ENCODE measurements at regions of chr1 and their contacts with region 1.

Region 1: DNA sequence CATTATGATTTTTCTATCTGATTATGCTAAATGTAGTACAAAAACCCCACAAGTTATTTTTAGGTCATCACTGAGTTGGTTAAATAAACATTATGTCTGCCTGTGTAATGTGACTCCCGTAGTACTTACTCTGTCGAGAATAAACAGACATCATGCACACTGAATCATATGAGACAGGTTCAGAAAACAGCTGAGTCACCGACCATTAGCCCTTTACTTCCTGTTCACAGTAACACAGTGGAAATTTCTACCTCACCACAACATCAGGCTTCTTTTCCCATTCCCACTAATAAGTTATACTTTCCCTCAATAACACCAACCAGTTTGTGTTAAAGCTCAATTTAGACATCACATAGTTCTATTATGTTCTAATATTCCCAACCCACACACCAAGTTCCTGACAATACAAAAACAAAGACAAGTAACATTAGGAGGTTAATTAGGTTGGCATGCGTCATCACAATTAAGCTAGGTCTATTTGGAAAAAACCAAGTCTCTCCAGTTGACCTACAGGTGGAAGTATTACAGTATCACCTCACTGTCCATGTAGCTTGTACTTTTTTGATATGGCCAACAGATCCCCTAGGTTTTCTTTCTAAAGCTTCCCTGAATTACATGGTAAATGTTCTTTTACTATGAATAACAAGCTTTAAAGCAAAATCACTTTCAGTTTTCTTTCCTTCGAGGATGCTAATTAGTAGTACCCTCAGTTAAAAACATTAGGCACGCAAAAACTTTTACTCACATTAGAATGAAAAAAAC is 154.2 kb downstream of the EIF4G3 start:
- DNase-seq: no peak
- ATAC-seq: peak; percentile 98 to 100 (median 99)
- H3K4me3 ChIP-seq: peak overlapping the region; percentile 38
- H3K27ac ChIP-seq: peak overlapping the region; percentile 90
- H3K4me1 ChIP-seq: peaks cover 25% of the 10 kb centered on the region
- H3K27me3 ChIP-seq: no peaks in the 10 kb centered on the region
- CTCF ChIP-seq: no peak

Region 2: DNA sequence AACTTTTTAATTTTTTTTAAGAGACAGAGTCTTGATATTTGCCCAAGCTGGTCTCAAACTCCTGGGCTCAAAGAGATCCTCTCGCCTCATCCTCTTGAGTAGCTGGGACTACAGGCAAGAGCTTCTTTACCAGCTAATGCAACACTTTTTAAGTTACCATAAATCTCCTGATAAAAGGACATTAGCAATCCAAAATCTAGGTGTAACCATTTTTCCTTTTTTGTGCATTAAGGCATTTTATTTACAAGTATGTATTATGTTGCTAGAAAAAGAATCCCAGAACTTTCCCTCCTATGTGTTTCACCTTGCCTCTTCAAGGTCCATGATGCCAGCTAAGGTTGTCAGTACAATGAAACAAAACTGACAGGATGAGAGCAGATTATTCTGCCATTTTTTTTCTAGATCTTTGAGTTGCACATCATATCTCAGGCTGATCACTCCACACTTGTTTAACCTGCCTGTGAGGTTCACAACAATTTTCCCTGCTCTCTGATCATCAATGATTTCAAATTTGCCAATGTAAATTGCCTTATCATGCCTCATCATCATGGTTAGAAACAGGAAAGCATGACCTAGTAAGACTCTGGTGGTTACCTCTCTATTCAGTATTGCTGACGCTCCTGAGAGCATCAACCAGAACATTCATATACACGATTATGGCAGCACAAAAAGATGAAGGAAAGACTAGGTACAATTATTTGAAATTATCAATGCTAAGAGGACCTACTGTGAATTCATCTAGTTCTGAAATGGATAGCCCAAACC is 19.0 kb before region 1 on chr1:
- intact Hi-C with region 1: loop called in 1 of 2 experiments (anchors 2 kb)
- DNase-seq: no peak
- ATAC-seq: no peak
- H3K4me3 ChIP-seq: no peak overlapping the region
- H3K27ac ChIP-seq: no peak overlapping the region
- H3K4me1 ChIP-seq: peaks cover 46% of the 10 kb centered on the region
- H3K27me3 ChIP-seq: no peaks in the 10 kb centered on the region
- CTCF ChIP-seq: no peak

Region 3: DNA sequence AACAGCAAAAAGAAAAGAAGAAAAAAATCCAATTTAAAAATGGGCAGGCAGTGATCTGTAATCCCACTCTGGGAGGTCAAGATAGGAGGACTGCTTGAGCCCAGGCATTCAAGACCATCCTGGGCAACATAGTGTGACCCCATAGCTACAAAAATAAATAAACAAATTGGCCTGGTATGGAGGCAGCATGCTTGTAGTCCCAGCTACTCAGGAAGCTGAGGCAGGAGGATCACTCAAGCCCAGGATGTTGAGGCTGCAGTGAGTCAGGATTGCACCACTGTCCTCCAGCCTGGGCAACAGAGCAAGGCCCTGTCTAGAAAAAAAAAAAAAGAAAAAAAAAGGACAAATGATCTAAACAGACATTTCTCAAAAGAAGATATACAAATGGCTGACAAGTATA is 54.6 kb after region 1 on chr1:
- intact Hi-C with region 1: loop called in 1 of 2 experiments (anchors 10 kb)
- DNase-seq: peak in 1 of 2 donors; percentile 37
- ATAC-seq: peak in 2 of 4 donors; percentile 32 to 63
- H3K4me3 ChIP-seq: no peak overlapping the region
- H3K27ac ChIP-seq: no peak overlapping the region
- H3K4me1 ChIP-seq: peaks cover 20% of the 10 kb centered on the region
- H3K27me3 ChIP-seq: no peaks in the 10 kb centered on the region
- CTCF ChIP-seq: no peak